ENCODE measurements at regions of chr4 and their contacts with region 1.

Region 1: GRCh38 chr4:69377562-69377961 is 97.3 kb downstream of the UGT2B28 start:
- DNase-seq: no peak
- ATAC-seq: no peak
- H3K4me3 ChIP-seq: no peak overlapping the region
- H3K4me3 Mint-ChIP-seq: no peak overlapping the region
- H3K27ac ChIP-seq: no peak overlapping the region
- H3K27ac Mint-ChIP-seq: no peak overlapping the region
- H3K4me1 ChIP-seq: no peaks in the 10 kb centered on the region
- H3K4me1 Mint-ChIP-seq: no peaks in the 10 kb centered on the region
- H3K27me3 ChIP-seq: no peaks in the 10 kb centered on the region
- H3K27me3 Mint-ChIP-seq: no peaks in the 10 kb centered on the region
- CTCF ChIP-seq: no peak

Region 2: GRCh38 chr4:67744561-67745283 is 1632.8 kb before region 1 on chr4:
- CTCF ChIA-PET with region 1: no interaction called
- POLR2A ChIA-PET with region 1: no interaction called
- intact Hi-C with region 1: no loop called
- DNase-seq: no peak
- ATAC-seq: no peak
- H3K4me3 ChIP-seq: no peak overlapping the region
- H3K4me3 Mint-ChIP-seq: no peak overlapping the region
- H3K27ac ChIP-seq: no peak overlapping the region
- H3K27ac Mint-ChIP-seq: no peak overlapping the region
- H3K4me1 ChIP-seq: no peaks in the 10 kb centered on the region
- H3K4me1 Mint-ChIP-seq: no peaks in the 10 kb centered on the region
- H3K27me3 ChIP-seq: no peaks in the 10 kb centered on the region
- H3K27me3 Mint-ChIP-seq: no peaks in the 10 kb centered on the region
- CTCF ChIP-seq: no peak

Region 3: GRCh38 chr4:69221649-69222048 is 155.9 kb before region 1 on chr4:
- CTCF ChIA-PET with region 1: no interaction called
- POLR2A ChIA-PET with region 1: no interaction called
- intact Hi-C with region 1: loop called (anchors 2 kb)
- DNase-seq: no peak
- ATAC-seq: no peak
- H3K4me3 ChIP-seq: no peak overlapping the region
- H3K4me3 Mint-ChIP-seq: no peak overlapping the region
- H3K27ac ChIP-seq: no peak overlapping the region
- H3K27ac Mint-ChIP-seq: no peak overlapping the region
- H3K4me1 ChIP-seq: no peaks in the 10 kb centered on the region
- H3K4me1 Mint-ChIP-seq: no peaks in the 10 kb centered on the region
- H3K27me3 ChIP-seq: no peaks in the 10 kb centered on the region
- H3K27me3 Mint-ChIP-seq: no peaks in the 10 kb centered on the region
- CTCF ChIP-seq: no peak